A673 (cell line): ENCODE measurements at regions of chrX and their contacts with region 1.

Region 1: GRCh38 chrX:57156397-57157049 is 19.3 kb upstream of the SPIN2A start:
- DNase-seq: peak; percentile 49
- H3K4me3 ChIP-seq: no peak overlapping the region
- H3K27ac ChIP-seq: no peak overlapping the region
- H3K4me1 ChIP-seq: no peaks in the 10 kb centered on the region
- H3K27me3 ChIP-seq: no peaks in the 10 kb centered on the region
- CTCF ChIP-seq: peak; percentile 59

Region 2: GRCh38 chrX:56857042-56857441 is 299.5 kb before region 1 on chrX:
- CTCF ChIA-PET with region 1: no interaction called
- POLR2A ChIA-PET with region 1: no interaction called
- intact Hi-C with region 1: no loop called
- DNase-seq: no peak
- H3K4me3 ChIP-seq: no peak overlapping the region
- H3K27ac ChIP-seq: no peak overlapping the region
- H3K4me1 ChIP-seq: no peaks in the 10 kb centered on the region
- H3K27me3 ChIP-seq: no peaks in the 10 kb centered on the region
- CTCF ChIP-seq: no peak

Region 3: DNA sequence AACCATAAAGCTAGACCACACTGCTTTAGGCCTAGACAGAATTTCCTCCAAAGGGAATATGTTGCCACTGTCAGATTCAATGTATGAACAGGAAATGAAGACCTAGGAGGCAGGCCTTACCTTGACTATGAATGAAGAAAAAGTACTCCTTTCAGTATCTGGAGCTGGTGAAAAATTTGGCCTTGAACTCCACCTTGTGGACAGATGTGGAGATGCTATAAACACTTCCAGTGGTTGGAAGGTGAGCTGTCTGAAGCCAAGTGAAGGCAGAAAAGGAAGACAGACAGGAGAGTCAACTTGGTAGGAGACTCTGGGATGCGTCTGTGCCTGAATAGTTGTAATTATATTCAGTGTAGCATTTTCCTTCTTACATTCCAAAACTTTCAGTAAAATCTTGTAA is 178.4 kb before region 1 on chrX:
- CTCF ChIA-PET with region 1: no interaction called
- POLR2A ChIA-PET with region 1: no interaction called
- intact Hi-C with region 1: no loop called
- DNase-seq: peak; percentile 57
- H3K4me3 ChIP-seq: no peak overlapping the region
- H3K27ac ChIP-seq: no peak overlapping the region
- H3K4me1 ChIP-seq: no peaks in the 10 kb centered on the region
- H3K27me3 ChIP-seq: peaks cover 4% of the 10 kb centered on the region
- CTCF ChIP-seq: peak; percentile 66

Region 4: DNA sequence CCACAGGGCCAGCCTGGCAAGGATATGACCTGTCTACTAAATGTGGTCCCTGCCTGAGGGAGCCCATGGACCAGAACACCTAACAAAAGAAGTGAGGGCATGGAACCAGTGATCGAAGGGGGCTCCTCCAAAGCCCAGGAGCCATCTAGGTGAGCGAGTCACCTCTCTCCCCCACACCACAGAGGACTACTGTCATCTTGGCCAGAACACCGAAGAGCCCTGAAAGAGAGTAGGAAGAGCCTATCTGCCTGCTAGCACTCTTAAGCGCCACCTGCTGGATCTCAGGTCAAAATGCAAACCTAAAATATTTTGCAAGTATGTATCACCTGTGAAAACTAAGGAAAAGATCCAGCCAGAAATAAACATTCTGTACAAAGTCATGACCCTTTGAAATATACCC is 297.4 kb after region 1 on chrX:
- CTCF ChIA-PET with region 1: no interaction called
- POLR2A ChIA-PET with region 1: no interaction called
- intact Hi-C with region 1: loop called (anchors 2 kb)
- DNase-seq: peak; percentile 39
- H3K4me3 ChIP-seq: no peak overlapping the region
- H3K27ac ChIP-seq: no peak overlapping the region
- H3K4me1 ChIP-seq: no peaks in the 10 kb centered on the region
- H3K27me3 ChIP-seq: no peaks in the 10 kb centered on the region
- CTCF ChIP-seq: peak; percentile 63

Region 5: DNA sequence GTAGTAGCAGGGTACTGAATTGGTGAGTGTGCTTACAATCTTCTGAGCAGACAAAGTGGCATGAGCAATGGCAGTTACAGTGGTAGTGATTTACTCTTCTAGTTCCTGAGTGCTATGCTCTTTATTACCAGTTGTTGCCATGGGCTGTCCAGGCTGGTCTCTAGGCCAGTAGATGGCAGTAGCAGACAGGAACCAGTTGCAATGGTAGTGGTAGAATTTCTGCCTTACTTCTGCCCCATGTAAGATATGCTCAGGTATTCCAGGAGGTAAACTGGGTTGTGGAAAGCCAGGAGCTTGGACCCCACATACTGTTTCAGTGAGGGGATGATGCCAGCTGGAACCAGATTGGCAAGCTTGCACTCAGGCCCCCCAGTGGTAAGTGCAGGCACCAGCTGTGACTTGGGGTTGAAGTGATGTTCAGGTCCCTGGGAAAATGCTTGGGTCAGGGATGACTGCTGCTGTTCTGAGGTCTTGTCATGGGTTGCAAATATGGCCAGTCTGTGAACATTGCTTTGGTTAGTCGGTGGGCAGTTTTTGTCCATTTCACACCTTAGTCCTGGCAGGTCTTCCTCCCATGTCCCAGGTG is 372.2 kb after region 1 on chrX:
- CTCF ChIA-PET with region 1: no interaction called
- POLR2A ChIA-PET with region 1: no interaction called
- intact Hi-C with region 1: no loop called
- DNase-seq: peak; percentile 8
- H3K4me3 ChIP-seq: no peak overlapping the region
- H3K27ac ChIP-seq: no peak overlapping the region
- H3K4me1 ChIP-seq: no peaks in the 10 kb centered on the region
- H3K27me3 ChIP-seq: no peaks in the 10 kb centered on the region
- CTCF ChIP-seq: peak; percentile 58